ENCODE measurements at regions of chr15 and their contacts with region 1.

Region 1: GRCh38 chr15:64905119-64905831 is 6.4 kb upstream of the ANKDD1A start:
- DNase-seq: peak; percentile 60 to 86 (median 79)
- ATAC-seq: peak; percentile 81
- H3K4me3 ChIP-seq: peak overlapping the region; percentile 11 to 21
- H3K4me3 Mint-ChIP-seq: peak overlapping the region; percentile 69
- H3K27ac ChIP-seq: no peak overlapping the region
- H3K27ac Mint-ChIP-seq: no peak overlapping the region
- H3K4me1 ChIP-seq: peaks cover 25% of the 10 kb centered on the region
- H3K4me1 Mint-ChIP-seq: peaks cover 37% of the 10 kb centered on the region
- H3K27me3 ChIP-seq: no peaks in the 10 kb centered on the region
- H3K27me3 Mint-ChIP-seq: peaks cover 4% of the 10 kb centered on the region
- CTCF ChIP-seq: peak; percentile 87

Region 2: DNA sequence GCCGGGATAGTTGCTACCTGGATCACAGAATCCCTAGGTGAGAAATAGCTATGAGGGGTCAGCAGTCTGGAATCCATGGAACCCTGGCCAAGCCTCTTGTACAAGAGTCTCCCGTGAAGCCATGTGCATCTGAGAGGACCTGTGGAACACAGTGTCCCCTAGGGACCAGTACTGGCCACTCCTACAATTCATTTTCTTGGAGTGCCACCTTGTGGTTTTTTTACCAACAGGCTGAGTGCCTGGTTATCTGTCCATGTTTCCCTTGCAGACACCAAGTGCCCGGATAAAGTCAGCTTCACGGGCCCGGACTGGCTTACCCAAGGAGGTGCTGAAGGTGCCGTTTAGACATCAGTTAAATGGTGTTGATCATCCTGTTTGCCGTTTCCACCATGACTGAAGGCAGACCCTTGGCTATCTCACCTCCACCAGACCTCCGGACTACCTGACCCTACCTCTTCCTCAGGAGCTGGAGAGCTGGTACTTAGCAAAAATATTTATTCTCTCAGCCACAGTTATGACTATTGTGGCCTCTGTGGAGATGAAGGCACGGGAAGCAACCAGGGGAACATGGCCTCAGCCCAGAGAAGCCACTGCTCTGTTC is 223.8 kb before region 1 on chr15:
- CTCF ChIA-PET with region 1: interaction called, 7 read pairs
- POLR2A ChIA-PET with region 1: no interaction called
- intact Hi-C with region 1: loop called (anchors 1 to 5 kb)
- DNase-seq: peak in 2 of 9 experiments; percentile 26 to 38
- ATAC-seq: no peak
- H3K4me3 ChIP-seq: no peak overlapping the region
- H3K4me3 Mint-ChIP-seq: no peak overlapping the region
- H3K27ac ChIP-seq: no peak overlapping the region
- H3K27ac Mint-ChIP-seq: peak overlapping the region; percentile 62
- H3K4me1 ChIP-seq: no peaks in the 10 kb centered on the region
- H3K4me1 Mint-ChIP-seq: peaks cover 3% of the 10 kb centered on the region
- H3K27me3 ChIP-seq: no peaks in the 10 kb centered on the region
- H3K27me3 Mint-ChIP-seq: no peaks in the 10 kb centered on the region
- CTCF ChIP-seq: no peak

Region 3: GRCh38 chr15:64836023-64836536 is 69.2 kb before region 1 on chr15:
- CTCF ChIA-PET with region 1: interaction called, 23 read pairs
- POLR2A ChIA-PET with region 1: no interaction called
- intact Hi-C with region 1: no loop called
- DNase-seq: no peak
- ATAC-seq: no peak
- H3K4me3 ChIP-seq: no peak overlapping the region
- H3K4me3 Mint-ChIP-seq: no peak overlapping the region
- H3K27ac ChIP-seq: no peak overlapping the region
- H3K27ac Mint-ChIP-seq: peak overlapping the region; percentile 43
- H3K4me1 ChIP-seq: peaks cover 53% of the 10 kb centered on the region
- H3K4me1 Mint-ChIP-seq: peaks cover 49% of the 10 kb centered on the region
- H3K27me3 ChIP-seq: no peaks in the 10 kb centered on the region
- H3K27me3 Mint-ChIP-seq: no peaks in the 10 kb centered on the region
- CTCF ChIP-seq: no peak

Region 4: GRCh38 chr15:64856429-64857145 is 48.7 kb before region 1 on chr15:
- CTCF ChIA-PET with region 1: interaction called, 13 read pairs
- POLR2A ChIA-PET with region 1: no interaction called
- intact Hi-C with region 1: loop called in 1 of 2 experiments (anchors 2 kb)
- DNase-seq: no peak
- ATAC-seq: no peak
- H3K4me3 ChIP-seq: no peak overlapping the region
- H3K4me3 Mint-ChIP-seq: no peak overlapping the region
- H3K27ac ChIP-seq: peak overlapping the region in 1 of 2 experiments; percentile 31
- H3K27ac Mint-ChIP-seq: peak overlapping the region; percentile 42
- H3K4me1 ChIP-seq: peaks cover 31% of the 10 kb centered on the region
- H3K4me1 Mint-ChIP-seq: peaks cover 49% of the 10 kb centered on the region
- H3K27me3 ChIP-seq: no peaks in the 10 kb centered on the region
- H3K27me3 Mint-ChIP-seq: no peaks in the 10 kb centered on the region
- CTCF ChIP-seq: no peak

Region 5: GRCh38 chr15:64883997-64884511 is 21.2 kb before region 1 on chr15:
- CTCF ChIA-PET with region 1: interaction called, 5 read pairs
- POLR2A ChIA-PET with region 1: no interaction called
- intact Hi-C with region 1: loop called (anchors 1 kb)
- DNase-seq: peak; percentile 47 to 88 (median 79)
- ATAC-seq: peak; percentile 55
- H3K4me3 ChIP-seq: no peak overlapping the region
- H3K4me3 Mint-ChIP-seq: peak overlapping the region; percentile 30
- H3K27ac ChIP-seq: peak overlapping the region in 1 of 2 experiments; percentile 77
- H3K27ac Mint-ChIP-seq: peak overlapping the region; percentile 74
- H3K4me1 ChIP-seq: peaks cover 28% of the 10 kb centered on the region
- H3K4me1 Mint-ChIP-seq: peaks cover 31% of the 10 kb centered on the region
- H3K27me3 ChIP-seq: no peaks in the 10 kb centered on the region
- H3K27me3 Mint-ChIP-seq: no peaks in the 10 kb centered on the region
- CTCF ChIP-seq: no peak

Measured in CD8-positive, alpha-beta T cell (primary cell).